MCF 10A (cell line): ENCODE measurements at regions of chr2 and their contacts with region 1.

Region 1: GRCh38 chr2:28661589-28662001 is 90.0 kb upstream of the PPP1CB start:
- DNase-seq: peak; percentile 88
- H3K4me3 Mint-ChIP-seq: no peak overlapping the region
- H3K27ac Mint-ChIP-seq: peak overlapping the region; percentile 78
- H3K4me1 Mint-ChIP-seq: peaks cover 44% of the 10 kb centered on the region
- H3K27me3 Mint-ChIP-seq: no peaks in the 10 kb centered on the region
- CTCF ChIP-seq: no peak

Region 2: GRCh38 chr2:28583899-28584553 is 77.6 kb before region 1 on chr2:
- CTCF ChIA-PET with region 1: no interaction called
- POLR2A ChIA-PET with region 1: interaction called, 13 read pairs
- intact Hi-C with region 1: no loop called
- DNase-seq: peak; percentile 95
- H3K4me3 Mint-ChIP-seq: peak overlapping the region; percentile 61
- H3K27ac Mint-ChIP-seq: peak overlapping the region; percentile 84
- H3K4me1 Mint-ChIP-seq: peaks cover 34% of the 10 kb centered on the region
- H3K27me3 Mint-ChIP-seq: no peaks in the 10 kb centered on the region
- CTCF ChIP-seq: no peak

Region 3: DNA sequence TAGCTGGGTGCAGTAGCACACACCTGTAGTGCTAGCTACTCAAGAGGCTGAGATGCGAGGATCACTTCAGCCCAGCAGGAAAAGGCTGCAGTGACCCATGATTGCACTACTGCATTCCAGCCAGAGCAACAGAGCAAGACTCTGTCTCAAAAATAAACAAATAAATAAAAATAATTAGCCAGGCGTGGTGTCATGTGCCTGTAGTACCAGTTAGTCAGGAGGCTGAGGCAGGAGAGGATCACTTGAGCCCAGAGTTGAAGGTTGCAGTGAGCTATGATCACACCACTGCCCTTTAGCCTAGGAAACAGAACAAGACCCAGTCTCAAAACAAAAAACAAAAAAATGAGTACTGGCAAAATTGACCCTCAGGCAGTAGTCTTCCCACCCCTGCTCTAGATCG is 28.2 kb after region 1 on chr2:
- CTCF ChIA-PET with region 1: no interaction called
- POLR2A ChIA-PET with region 1: no interaction called
- intact Hi-C with region 1: no loop called
- DNase-seq: no peak
- H3K4me3 Mint-ChIP-seq: no peak overlapping the region
- H3K27ac Mint-ChIP-seq: no peak overlapping the region
- H3K4me1 Mint-ChIP-seq: peaks cover 20% of the 10 kb centered on the region
- H3K27me3 Mint-ChIP-seq: no peaks in the 10 kb centered on the region
- CTCF ChIP-seq: no peak